Mammary epithelial cell (primary cell): ENCODE measurements at regions of chr3 and their contacts with region 1.

Region 1: GRCh38 chr3:13895155-13896105 is 15.6 kb upstream of the WNT7A start:
- DNase-seq: peak; percentile 93
- H3K4me3 ChIP-seq: peak overlapping the region; percentile 55 to 84 (median 63)
- H3K27ac ChIP-seq: peak overlapping the region; percentile 32
- H3K4me1 ChIP-seq: peaks cover 31% of the 10 kb centered on the region
- H3K27me3 ChIP-seq: no peaks in the 10 kb centered on the region
- CTCF ChIP-seq: no peak

Region 2: GRCh38 chr3:13866041-13866965 is 29.1 kb before region 1 on chr3:
- CTCF ChIA-PET with region 1: no interaction called
- dilution Hi-C with region 1: no loop called
- in situ Hi-C with region 1: no loop called
- intact Hi-C with region 1: no loop called
- DNase-seq: no peak
- H3K4me3 ChIP-seq: no peak overlapping the region
- H3K27ac ChIP-seq: no peak overlapping the region
- H3K4me1 ChIP-seq: peaks cover 13% of the 10 kb centered on the region
- H3K27me3 ChIP-seq: no peaks in the 10 kb centered on the region
- CTCF ChIP-seq: no peak

Region 3: GRCh38 chr3:14113965-14114635 is 218.7 kb after region 1 on chr3:
- CTCF ChIA-PET with region 1: interaction called, 7 read pairs
- dilution Hi-C with region 1: no loop called
- in situ Hi-C with region 1: loop called in 1 of 2 experiments (anchors 10 kb)
- intact Hi-C with region 1: loop called (anchors 1 kb)
- DNase-seq: no peak
- H3K4me3 ChIP-seq: no peak overlapping the region
- H3K27ac ChIP-seq: no peak overlapping the region
- H3K4me1 ChIP-seq: no peaks in the 10 kb centered on the region
- H3K27me3 ChIP-seq: no peaks in the 10 kb centered on the region
- CTCF ChIP-seq: peak; percentile 11 to 48

Region 4: DNA sequence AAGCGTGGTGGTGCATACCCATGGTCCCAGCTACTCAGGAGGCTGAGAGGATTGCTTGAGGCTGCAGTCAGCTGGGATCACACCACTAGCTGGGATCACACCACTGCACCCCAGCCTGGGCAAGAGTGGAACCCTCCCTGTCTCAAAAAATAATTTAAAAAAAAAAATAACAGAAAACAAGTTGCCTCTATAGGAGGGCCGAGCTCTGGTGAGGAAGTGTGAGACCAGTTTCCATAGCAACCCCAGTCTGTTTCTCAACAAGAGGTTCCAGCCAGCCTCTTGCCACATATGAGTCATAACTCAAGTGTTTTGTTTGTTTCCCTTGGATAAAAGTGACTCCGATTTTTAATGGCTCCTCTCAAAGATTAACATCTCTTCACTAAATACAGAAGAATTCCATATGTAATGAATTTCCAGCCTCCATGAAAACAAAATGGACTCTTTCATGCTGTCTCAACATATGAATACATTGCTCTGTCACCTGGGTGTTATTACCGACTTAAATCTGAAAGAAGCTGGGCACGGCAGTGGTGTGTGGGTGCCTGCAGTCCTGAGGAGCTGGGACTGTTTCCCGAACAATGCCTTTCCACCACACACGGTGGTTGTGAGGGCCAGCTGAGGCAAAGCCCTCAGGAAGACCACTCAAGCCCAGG is 249.1 kb after region 1 on chr3:
- CTCF ChIA-PET with region 1: no interaction called
- dilution Hi-C with region 1: no loop called
- in situ Hi-C with region 1: no loop called
- intact Hi-C with region 1: loop called (anchors 1 kb)
- DNase-seq: peak; percentile 94
- H3K4me3 ChIP-seq: peak overlapping the region in 1 of 3 experiments; percentile 18
- H3K27ac ChIP-seq: peak overlapping the region; percentile 99
- H3K4me1 ChIP-seq: peaks cover 40% of the 10 kb centered on the region
- H3K27me3 ChIP-seq: no peaks in the 10 kb centered on the region
- CTCF ChIP-seq: no peak

Region 5: DNA sequence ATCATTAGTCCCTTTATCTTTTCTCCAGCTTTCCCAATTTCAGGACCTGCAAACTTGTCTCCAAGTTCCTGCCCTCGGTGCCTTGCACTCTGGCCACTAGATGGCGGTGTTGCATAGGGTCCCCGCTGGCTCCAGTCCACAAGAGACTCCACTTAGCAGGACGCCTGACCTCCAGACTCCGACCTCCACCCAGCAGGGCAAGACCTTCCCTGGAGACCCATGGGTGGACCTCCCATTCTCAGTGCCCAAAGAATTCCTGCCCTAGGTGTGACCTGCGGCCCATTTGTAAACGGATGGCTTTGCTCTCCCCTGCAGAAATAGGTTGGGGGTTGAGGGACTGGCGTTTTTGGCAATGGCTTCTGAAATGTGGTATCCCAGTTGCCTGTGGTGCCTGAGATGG is 365.8 kb after region 1 on chr3:
- CTCF ChIA-PET with region 1: no interaction called
- dilution Hi-C with region 1: no loop called
- in situ Hi-C with region 1: no loop called
- intact Hi-C with region 1: loop called (anchors 1 kb)
- DNase-seq: peak; percentile 46
- H3K4me3 ChIP-seq: no peak overlapping the region
- H3K27ac ChIP-seq: no peak overlapping the region
- H3K4me1 ChIP-seq: peaks cover 7% of the 10 kb centered on the region
- H3K27me3 ChIP-seq: no peaks in the 10 kb centered on the region
- CTCF ChIP-seq: peak; percentile 98

Region 6: DNA sequence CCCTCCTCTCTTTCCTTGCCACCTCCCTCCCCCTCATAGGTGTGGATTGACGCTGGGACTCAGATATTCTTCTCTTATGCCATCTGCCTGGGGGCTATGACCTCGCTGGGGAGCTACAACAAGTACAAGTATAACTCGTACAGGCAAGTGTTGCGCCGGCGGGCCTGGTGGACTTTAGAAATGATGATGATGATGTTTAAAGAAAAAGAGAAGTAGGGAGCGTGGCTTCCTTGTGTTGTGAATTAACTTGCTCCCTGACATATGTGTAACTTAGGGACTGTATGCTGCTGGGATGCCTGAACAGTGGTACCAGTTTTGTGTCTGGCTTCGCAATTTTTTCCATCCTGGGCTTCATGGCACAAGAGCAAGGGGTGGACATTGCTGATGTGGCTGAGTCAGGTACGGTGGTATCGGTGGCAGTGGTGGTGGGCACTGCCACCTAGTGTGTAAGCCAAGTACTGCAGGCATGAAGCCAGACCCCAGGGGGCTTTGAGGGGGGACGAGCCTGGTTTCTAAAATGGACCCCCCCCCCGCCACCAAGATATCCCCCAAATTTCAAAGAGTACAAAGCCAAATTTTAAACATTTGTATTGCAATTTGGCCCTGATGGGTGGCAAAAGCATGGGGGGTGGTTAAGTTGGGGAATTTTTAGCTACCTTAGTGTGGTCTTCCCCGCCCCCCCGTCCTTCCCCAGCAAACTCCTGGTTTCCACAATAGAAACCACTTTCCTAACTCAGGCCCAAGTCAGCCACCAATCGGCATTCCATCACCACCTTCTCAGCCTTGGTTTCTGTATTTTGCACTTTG is 572.6 kb after region 1 on chr3:
- CTCF ChIA-PET with region 1: interaction called, 4 read pairs
- dilution Hi-C with region 1: loop called (anchors 25 kb)
- in situ Hi-C with region 1: loop called (anchors 10 kb)
- intact Hi-C with region 1: loop called (anchors 2 kb)
- DNase-seq: no peak
- H3K4me3 ChIP-seq: no peak overlapping the region
- H3K27ac ChIP-seq: no peak overlapping the region
- H3K4me1 ChIP-seq: peaks cover 9% of the 10 kb centered on the region
- H3K27me3 ChIP-seq: no peaks in the 10 kb centered on the region
- CTCF ChIP-seq: peak; percentile 63 to 78